ENCODE measurements at regions of chr12 and their contacts with region 1.

Region 1: DNA sequence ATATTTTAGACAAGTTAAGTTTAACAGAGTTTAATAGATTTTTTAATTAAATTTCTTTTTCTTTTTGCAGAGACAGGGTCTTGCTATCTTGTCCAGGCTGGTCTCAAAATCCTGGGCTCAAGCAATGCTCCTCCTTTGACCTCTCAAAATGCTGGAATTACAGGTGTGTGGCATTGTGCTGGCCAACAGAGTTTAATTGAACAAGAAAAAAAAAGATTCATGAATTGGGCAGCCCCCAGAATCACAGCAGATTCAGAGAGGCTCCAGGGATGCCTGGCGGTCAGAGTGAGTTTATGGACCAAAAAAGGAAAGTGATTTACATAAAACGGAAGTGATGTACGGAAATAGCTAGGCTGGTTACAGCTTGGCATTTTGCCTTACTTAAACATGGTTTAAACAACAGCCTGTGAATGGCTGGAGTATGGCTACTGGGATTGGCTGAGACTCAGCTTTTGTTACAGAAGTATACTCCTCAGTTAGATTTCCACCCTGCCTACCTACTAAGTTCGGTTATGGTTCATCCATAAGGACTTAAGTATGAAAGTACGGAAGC is 14.5 kb upstream of the TESPA1 start:
- DNase-seq: no peak
- H3K4me3 ChIP-seq: no peak overlapping the region
- CTCF ChIP-seq: no peak

Region 2: GRCh38 chr12:54958048-54958658 is 40.9 kb before region 1 on chr12:
- in situ Hi-C with region 1: no loop called
- DNase-seq: peak; percentile 47
- H3K4me3 ChIP-seq: no peak overlapping the region
- CTCF ChIP-seq: peak; percentile 63

Region 3: GRCh38 chr12:55074771-55075170 is 75.7 kb after region 1 on chr12:
- in situ Hi-C with region 1: loop called (anchors 5 kb)
- DNase-seq: no peak
- H3K4me3 ChIP-seq: no peak overlapping the region
- CTCF ChIP-seq: no peak

Measured in astrocyte of the cerebellum (primary cell).